Activated B cell treated with CpG ODN at 0.5 μM for 24 hours (primary cell): ENCODE measurements at regions of chr14 and their contacts with region 1.

Region 1: DNA sequence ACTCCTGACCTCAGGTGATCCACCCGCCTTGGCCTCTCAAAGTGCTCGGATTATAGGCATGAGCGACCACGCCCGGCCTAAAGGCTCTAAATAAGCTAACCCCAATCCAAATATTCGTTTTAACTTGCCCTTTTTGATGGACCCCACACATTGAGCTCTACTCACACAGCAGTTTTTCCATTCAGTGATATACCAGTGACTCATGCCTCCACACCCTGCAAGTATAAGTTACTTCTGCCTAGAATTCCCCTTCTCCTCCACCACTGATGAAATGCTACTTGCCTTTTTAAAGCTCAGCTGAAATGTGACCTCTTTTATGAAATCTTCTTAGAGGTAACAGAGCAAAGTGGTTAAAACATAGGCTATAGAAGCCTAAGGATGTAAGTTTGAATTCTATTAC is 68.8 kb downstream of the EXOC5 start:
- DNase-seq: no peak
- ATAC-seq: no peak
- H3K4me3 Mint-ChIP-seq: no peak overlapping the region
- H3K27ac Mint-ChIP-seq: no peak overlapping the region
- H3K4me1 Mint-ChIP-seq: no peaks in the 10 kb centered on the region
- H3K27me3 Mint-ChIP-seq: peaks cover 3% of the 10 kb centered on the region
- CTCF ChIP-seq: no peak

Region 2: GRCh38 chr14:56570295-56570694 is 629.6 kb before region 1 on chr14:
- CTCF ChIA-PET with region 1: no interaction called
- POLR2A ChIA-PET with region 1: no interaction called
- intact Hi-C with region 1: loop called (anchors 5 kb)
- DNase-seq: no peak
- ATAC-seq: no peak
- H3K4me3 Mint-ChIP-seq: no peak overlapping the region
- H3K27ac Mint-ChIP-seq: no peak overlapping the region
- H3K4me1 Mint-ChIP-seq: no peaks in the 10 kb centered on the region
- H3K27me3 Mint-ChIP-seq: peaks cover 22% of the 10 kb centered on the region
- CTCF ChIP-seq: no peak